PC-9 (cell line): ENCODE measurements at regions of chr11 and their contacts with region 1.

Region 1: DNA sequence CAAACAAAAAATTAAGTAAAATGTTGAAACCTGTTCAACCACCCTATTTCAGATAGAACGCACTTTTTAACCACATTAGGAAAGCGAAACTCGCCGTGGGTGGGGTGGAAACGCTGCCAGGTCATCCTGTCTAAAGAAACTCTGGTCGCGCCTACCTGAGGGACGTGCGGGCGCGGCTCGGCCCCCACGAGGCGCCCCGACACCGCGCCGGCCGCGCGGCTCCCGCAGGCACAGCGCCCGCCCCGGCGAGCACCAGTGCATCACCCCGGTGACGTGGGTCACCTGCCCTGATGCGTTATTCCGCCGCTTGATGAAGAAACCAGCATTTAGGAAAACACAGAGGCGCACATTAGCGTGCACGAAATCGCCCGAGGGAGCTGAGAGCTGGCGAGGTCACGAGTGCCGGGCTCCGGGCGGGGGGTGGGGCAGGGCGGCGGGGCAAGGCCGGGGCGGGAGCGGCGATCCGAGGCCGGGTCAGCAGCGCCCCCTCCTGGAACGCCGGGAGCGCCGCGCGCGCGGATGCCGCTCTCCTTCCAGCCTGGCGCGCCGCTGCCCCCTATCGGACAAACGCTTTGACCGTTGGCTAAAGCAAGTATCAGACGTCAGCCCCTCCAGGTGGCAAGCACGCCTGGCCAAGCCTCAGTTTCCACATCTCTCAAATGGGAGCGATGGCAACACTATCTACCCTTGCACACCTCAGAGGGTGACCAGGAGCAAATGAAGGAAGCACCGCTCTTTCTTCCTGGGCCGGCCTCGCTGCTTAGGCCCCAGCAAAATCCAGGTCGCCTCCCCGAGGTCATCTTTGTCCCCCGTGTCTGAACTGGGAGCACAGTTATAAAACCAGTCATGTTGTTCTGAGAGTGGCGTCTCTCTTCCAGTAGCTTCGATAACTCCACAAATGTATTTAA is 15.7 kb upstream of the SNX32 start:
- DNase-seq: peak; percentile 71 to 95
- H3K4me3 ChIP-seq: peak overlapping the region; percentile 70
- H3K27ac ChIP-seq: peak overlapping the region; percentile 55
- H3K4me1 ChIP-seq: peaks cover 8% of the 10 kb centered on the region; the same call in 1 of the 2 replicates
- H3K27me3 ChIP-seq: no peaks in the 10 kb centered on the region
- CTCF ChIP-seq: peak; percentile 96

Region 2: GRCh38 chr11:65637794-65638317 is 180.2 kb before region 1 on chr11 and contains the start of gene SIPA1:
- CTCF ChIA-PET with region 1: no interaction called
- POLR2A ChIA-PET with region 1: no interaction called
- intact Hi-C with region 1: loop called (anchors 5 kb)
- DNase-seq: peak; percentile 86 to 94
- H3K4me3 ChIP-seq: peak within 1 kb of the TSS; percentile 57
- H3K27ac ChIP-seq: peak within 1 kb of the TSS; percentile 18
- H3K4me1 ChIP-seq: peaks cover 17% of the 10 kb centered on the region
- H3K27me3 ChIP-seq: no peaks in the 10 kb centered on the region
- CTCF ChIP-seq: peak; percentile 68
- total RNA-seq, gene SIPA1: 65.6 and 81.3 TPM in 2 replicates

Region 3: GRCh38 chr11:65743928-65744698 is 74.0 kb before region 1 on chr11:
- CTCF ChIA-PET with region 1: no interaction called
- POLR2A ChIA-PET with region 1: no interaction called
- intact Hi-C with region 1: loop called (anchors 2 kb)
- DNase-seq: peak; percentile 28 to 72
- H3K4me3 ChIP-seq: no peak overlapping the region
- H3K27ac ChIP-seq: no peak overlapping the region
- H3K4me1 ChIP-seq: 0 out of 2 replicates have a peak, but pooled peaks cover 4% of the 10 kb centered on the region
- H3K27me3 ChIP-seq: peaks cover 8% of the 10 kb centered on the region; the same call in 1 of the 2 replicates
- CTCF ChIP-seq: peak; percentile 81

Region 4: GRCh38 chr11:65779851-65780577 is 38.1 kb before region 1 on chr11:
- CTCF ChIA-PET with region 1: interaction called, 16 read pairs
- POLR2A ChIA-PET with region 1: no interaction called
- intact Hi-C with region 1: loop called (anchors 1 kb)
- DNase-seq: peak; percentile 62 to 90
- H3K4me3 ChIP-seq: peak overlapping the region; percentile 58
- H3K27ac ChIP-seq: peak overlapping the region; percentile 52
- H3K4me1 ChIP-seq: peaks cover 28% of the 10 kb centered on the region
- H3K27me3 ChIP-seq: no peaks in the 10 kb centered on the region
- CTCF ChIP-seq: peak; percentile 94

Region 5: GRCh38 chr11:65791691-65792213 is 26.3 kb before region 1 on chr11:
- CTCF ChIA-PET with region 1: no interaction called
- POLR2A ChIA-PET with region 1: no interaction called
- intact Hi-C with region 1: no loop called
- DNase-seq: peak; percentile 86 to 91
- H3K4me3 ChIP-seq: peak overlapping the region; percentile 33; the same call in 1 of the 2 replicates
- H3K27ac ChIP-seq: peak overlapping the region; percentile 89
- H3K4me1 ChIP-seq: peaks cover 65% of the 10 kb centered on the region
- H3K27me3 ChIP-seq: no peaks in the 10 kb centered on the region
- CTCF ChIP-seq: no peak; the same call in 1 of the 2 replicates

Region 6: DNA sequence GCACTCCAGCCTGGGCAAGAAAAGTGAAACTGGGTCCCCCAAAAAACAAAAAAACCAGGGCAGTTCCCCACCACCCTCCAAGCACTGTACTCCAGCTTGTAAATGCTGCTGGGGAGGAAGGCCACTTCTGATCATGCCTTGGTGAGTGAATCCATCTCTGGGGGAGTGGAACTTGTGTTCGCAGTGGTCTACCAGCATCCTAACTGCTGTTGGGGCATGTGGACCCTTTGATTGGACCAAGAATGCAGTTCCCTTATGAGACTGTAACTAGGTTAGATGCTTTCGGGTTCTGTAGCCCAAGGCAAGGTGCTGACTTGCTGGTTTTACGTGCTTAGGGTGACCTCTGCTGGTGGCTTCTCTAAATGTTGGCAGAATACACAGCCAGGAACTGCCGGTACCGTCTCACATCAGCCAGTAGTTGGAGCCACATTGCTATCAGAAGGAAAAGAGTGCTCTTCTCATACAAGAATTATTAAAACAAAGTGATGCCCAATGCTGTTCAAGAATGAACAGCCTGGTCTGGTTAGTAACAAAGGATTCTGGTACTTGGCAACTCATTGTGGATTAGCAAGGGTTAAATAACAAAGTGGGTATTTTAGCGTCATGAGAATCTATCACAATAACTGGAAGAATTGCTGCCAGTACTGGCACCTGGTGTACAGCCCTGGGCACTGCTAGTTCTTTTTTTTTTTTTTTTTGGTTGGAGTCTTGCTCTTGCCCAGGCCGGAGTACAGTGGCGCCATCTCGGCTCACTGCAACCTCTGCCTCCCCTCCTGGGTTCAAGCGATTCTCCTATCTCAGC is 170.9 kb after region 1 on chr11:
- CTCF ChIA-PET with region 1: no interaction called
- POLR2A ChIA-PET with region 1: no interaction called
- intact Hi-C with region 1: loop called (anchors 1 kb)
- DNase-seq: peak; percentile 87 to 92
- H3K4me3 ChIP-seq: no peak overlapping the region
- H3K27ac ChIP-seq: no peak overlapping the region
- H3K4me1 ChIP-seq: peaks cover 4% of the 10 kb centered on the region; the same call in 1 of the 2 replicates
- H3K27me3 ChIP-seq: no peaks in the 10 kb centered on the region
- CTCF ChIP-seq: peak; percentile 99